ENCODE measurements at regions of chr3 and their contacts with region 1.

Region 1: DNA sequence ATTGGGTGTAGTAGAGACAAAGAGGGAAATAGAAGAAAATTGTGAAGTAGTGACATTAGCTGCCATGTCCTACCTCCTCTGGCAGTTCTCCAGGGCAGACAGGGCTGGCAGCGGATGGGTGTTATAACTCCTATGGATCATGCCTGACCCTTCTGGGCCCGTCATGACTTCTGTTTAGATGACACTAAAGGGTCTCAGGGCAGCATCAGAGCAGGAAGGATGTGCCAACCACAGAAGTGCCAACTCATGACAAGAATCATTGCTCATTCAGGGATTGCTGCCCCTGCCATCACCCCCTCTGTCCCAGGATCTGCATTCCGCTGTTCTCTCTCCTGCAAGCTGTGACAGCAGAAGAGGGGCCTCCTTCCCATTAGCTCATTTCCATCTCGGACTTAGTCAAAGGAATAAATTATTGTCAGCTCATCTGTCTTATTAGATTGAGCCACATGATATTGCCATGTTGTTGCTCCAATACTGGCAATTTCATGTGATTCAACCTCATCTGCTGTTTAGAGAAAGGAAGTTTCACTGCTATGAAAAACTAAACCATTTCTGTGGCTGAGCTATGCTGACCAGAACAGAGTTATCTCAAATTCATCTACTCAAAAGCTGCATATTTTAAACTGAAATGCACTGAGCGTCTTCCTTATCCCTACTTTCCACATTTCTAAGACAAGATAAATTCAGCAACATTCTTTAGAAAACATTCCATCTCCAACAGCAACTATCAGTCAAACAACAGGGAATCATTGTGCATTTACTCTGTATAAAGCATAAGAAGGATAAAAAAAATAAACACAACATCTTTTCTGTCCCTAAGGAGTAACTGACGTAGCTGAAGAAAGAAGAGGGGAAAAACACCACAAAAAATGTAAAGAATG is 271.6 kb downstream of the FHIT start:
- DNase-seq: no peak
- H3K4me3 Mint-ChIP-seq: no peak overlapping the region
- H3K27ac Mint-ChIP-seq: no peak overlapping the region
- H3K4me1 Mint-ChIP-seq: no peaks in the 10 kb centered on the region
- H3K27me3 Mint-ChIP-seq: no peaks in the 10 kb centered on the region
- CTCF ChIP-seq: no peak

Region 2: DNA sequence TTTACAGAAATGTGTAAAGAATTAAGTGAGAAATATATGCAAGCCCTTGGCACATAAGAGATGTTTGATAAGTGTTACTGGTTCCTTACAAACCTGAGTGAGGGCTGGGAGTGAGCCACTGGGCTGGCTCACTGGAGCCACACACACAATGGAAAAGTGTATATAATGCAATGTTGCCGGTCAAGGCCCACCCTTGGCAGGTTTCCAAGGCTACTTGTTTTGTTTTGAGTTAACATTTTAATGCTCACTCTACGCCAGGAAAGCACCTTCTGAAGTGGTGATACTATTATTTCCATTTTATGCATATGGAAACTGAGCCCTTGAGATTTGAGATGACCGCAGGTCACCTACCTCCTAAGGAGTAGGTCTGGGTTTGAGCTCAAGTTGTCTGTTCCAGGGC is 343.4 kb after region 1 on chr3:
- CTCF ChIA-PET with region 1: no interaction called
- intact Hi-C with region 1: loop called (anchors 10 kb)
- DNase-seq: no peak
- H3K4me3 Mint-ChIP-seq: no peak overlapping the region
- H3K27ac Mint-ChIP-seq: no peak overlapping the region
- H3K4me1 Mint-ChIP-seq: no peaks in the 10 kb centered on the region
- H3K27me3 Mint-ChIP-seq: no peaks in the 10 kb centered on the region
- CTCF ChIP-seq: no peak

Region 3: DNA sequence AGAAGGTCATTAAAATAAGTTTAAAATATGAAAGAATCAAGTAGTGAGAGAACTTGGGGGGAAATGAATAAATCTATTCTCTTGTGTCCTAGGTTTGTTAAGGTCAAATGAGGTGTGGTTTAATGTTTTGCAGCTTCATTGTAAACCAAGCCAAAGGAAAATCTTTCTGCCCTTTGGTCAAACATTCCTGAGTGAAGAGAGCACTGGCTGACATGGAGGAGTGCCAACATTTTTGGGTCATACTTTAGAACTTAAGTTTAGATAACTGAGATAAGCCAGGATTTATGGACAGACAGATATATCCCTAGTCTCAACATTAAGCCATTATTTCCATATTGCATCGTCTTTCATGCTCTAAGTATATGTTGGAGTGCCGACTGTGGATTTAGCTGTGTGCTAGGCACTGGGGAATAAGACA is 648.1 kb after region 1 on chr3:
- CTCF ChIA-PET with region 1: no interaction called
- intact Hi-C with region 1: no loop called
- DNase-seq: no peak
- H3K4me3 Mint-ChIP-seq: no peak overlapping the region
- H3K27ac Mint-ChIP-seq: no peak overlapping the region
- H3K4me1 Mint-ChIP-seq: no peaks in the 10 kb centered on the region
- H3K27me3 Mint-ChIP-seq: no peaks in the 10 kb centered on the region
- CTCF ChIP-seq: no peak